Prostate gland (tissue), 2 donors: ENCODE measurements at regions of chr14 and their contacts with region 1.

Region 1: GRCh38 chr14:74249433-74250375 is 10.5 kb downstream of the VSX2 start:
- DNase-seq: no peak
- H3K4me3 ChIP-seq: no peak overlapping the region
- H3K27ac ChIP-seq: no peak overlapping the region
- H3K4me1 ChIP-seq: no peaks in the 10 kb centered on the region
- H3K27me3 ChIP-seq: peaks cover 6% of the 10 kb centered on the region
- CTCF ChIP-seq: no peak
- POLR2A ChIP-seq: no peak

Region 2: GRCh38 chr14:74109369-74109768 is 140.3 kb before region 1 on chr14:
- intact Hi-C with region 1: loop called (anchors 5 kb)
- DNase-seq: no peak
- H3K4me3 ChIP-seq: no peak overlapping the region
- H3K27ac ChIP-seq: no peak overlapping the region
- H3K4me1 ChIP-seq: no peaks in the 10 kb centered on the region
- H3K27me3 ChIP-seq: no peaks in the 10 kb centered on the region
- CTCF ChIP-seq: no peak
- POLR2A ChIP-seq: no peak

Region 3: DNA sequence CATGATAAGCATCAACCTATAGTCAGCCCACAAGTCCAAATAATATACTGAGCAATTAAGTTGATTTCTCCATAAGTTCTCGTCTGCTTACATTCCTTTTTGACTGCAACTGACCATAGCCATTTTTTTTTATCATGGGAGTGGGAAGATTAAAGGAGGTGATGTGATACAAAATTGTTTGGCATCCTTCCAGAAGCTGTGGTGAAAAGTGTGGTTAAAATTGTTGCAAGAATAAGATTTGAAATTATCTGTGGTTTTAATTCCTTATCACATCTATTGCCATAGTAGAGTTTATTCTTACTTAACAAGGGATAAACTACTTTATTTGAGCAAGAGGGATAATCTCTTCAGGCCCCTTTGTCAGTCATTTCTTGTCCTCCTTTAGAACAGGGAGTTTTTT is 114.3 kb before region 1 on chr14:
- intact Hi-C with region 1: no loop called
- DNase-seq: no peak
- H3K4me3 ChIP-seq: no peak overlapping the region
- H3K27ac ChIP-seq: no peak overlapping the region
- H3K4me1 ChIP-seq: no peaks in the 10 kb centered on the region
- H3K27me3 ChIP-seq: no peaks in the 10 kb centered on the region
- CTCF ChIP-seq: no peak
- POLR2A ChIP-seq: no peak

Region 4: GRCh38 chr14:74217672-74218448 is 31.8 kb before region 1 on chr14:
- intact Hi-C with region 1: loop called (anchors 5 kb)
- DNase-seq: peak; percentile 14
- H3K4me3 ChIP-seq: no peak overlapping the region
- H3K27ac ChIP-seq: no peak overlapping the region
- H3K4me1 ChIP-seq: no peaks in the 10 kb centered on the region
- H3K27me3 ChIP-seq: no peaks in the 10 kb centered on the region
- CTCF ChIP-seq: peak; percentile 56 to 74 (median 60)
- POLR2A ChIP-seq: no peak

Region 5: DNA sequence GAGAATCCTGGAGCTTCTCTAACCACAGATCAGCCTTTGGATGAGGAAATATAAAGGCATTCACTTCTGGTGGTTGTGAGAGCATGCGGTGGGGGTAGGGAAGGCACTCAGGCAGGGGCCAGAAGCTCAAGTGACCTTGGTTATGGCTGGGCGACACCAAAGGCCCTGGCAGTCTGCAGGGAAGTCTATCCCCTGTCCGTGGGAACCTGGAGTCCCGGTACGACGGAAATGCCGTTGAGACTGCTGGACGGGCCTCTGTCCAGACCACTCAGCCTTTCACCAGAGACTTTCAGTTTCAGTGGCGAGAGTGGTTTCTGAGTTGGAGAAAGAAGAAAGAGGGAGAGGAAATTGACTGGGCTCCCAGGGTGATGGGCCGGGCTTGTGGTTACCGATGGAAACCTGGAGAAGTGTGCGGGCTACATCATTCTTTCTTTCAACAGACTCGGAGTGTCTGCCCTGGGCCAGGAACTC is 264.8 kb after region 1 on chr14:
- intact Hi-C with region 1: no loop called
- DNase-seq: no peak
- H3K4me3 ChIP-seq: no peak overlapping the region
- H3K27ac ChIP-seq: no peak overlapping the region
- H3K4me1 ChIP-seq: no peaks in the 10 kb centered on the region
- H3K27me3 ChIP-seq: no peaks in the 10 kb centered on the region
- CTCF ChIP-seq: no peak
- POLR2A ChIP-seq: no peak